ENCODE measurements at regions of chrX and their contacts with region 1.

Region 1: GRCh38 chrX:119468930-119469635 is 839 bp downstream of the SLC25A5 start:
- DNase-seq: peak; percentile 74 to 86
- ATAC-seq: peak; percentile 82 to 85
- H3K4me3 ChIP-seq: peak overlapping the region; percentile 79 to 95 (median 89)
- H3K27ac ChIP-seq: peak overlapping the region; percentile 95 to 99 (median 98)
- H3K4me1 ChIP-seq: peaks cover 0 to 6% of the 10 kb centered on the region in 2 donors
- H3K27me3 ChIP-seq: no peaks in the 10 kb centered on the region
- CTCF ChIP-seq: peak; percentile 64 to 85 (median 77)
- POLR2A ChIP-seq: peak; percentile 54 to 64

Region 2: GRCh38 chrX:119516157-119516702 is 47.1 kb after region 1 on chrX:
- in situ Hi-C with region 1: no loop called
- intact Hi-C with region 1: loop called (anchors 1 kb)
- DNase-seq: peak; percentile 5 to 16
- ATAC-seq: peak; percentile 62 to 87
- H3K4me3 ChIP-seq: no peak overlapping the region
- H3K27ac ChIP-seq: no peak overlapping the region
- H3K4me1 ChIP-seq: no peaks in the 10 kb centered on the region
- H3K27me3 ChIP-seq: no peaks in the 10 kb centered on the region
- CTCF ChIP-seq: peak; percentile 33 to 71 (median 61)
- POLR2A ChIP-seq: no peak

Region 3: DNA sequence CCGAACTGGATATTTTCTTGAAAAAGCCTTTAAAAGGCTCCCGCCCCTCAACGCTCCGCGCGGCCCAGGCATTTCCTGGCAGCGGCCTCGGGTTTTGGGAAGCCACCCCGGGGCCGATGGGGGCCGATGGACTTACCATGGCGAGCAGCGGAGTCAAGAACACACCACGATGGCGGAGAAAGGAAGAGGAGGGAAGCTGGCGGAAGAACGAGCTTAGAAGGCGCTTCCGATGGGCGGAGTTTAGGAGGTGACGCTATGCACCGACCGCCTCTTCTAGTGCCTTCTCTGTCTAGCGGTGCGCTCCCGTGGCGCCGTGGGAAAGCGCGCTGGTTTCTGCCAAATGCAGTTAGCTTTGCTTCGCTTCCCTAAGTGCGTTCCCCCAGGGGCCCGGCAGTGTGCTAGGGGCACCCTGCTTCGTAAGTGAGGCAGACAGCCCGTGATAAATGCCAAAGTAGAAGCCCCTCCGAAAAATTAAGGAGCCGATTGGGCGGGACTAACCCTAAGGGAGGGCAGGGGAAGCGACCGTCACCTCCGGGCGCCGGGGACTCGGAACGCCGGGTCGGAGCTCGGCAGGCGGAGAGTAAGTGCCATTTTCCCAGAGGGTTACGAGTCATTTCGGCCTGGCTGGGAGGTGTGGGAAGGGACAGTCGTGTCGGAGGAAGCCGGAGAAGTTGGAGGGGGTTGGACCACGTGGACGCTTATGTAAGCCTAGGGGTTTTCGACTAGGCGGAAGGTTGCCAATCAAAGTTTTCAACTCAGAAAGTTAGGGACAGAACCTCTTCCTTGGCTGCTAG is 322.6 kb after region 1 on chrX and contains the start of gene RPL39:
- in situ Hi-C with region 1: no loop called
- intact Hi-C with region 1: loop called (anchors 2 kb)
- DNase-seq: peak; percentile 71 to 80
- ATAC-seq: peak; percentile 98
- H3K4me3 ChIP-seq: peak within 1 kb of the TSS; percentile 76 to 95 (median 82)
- H3K27ac ChIP-seq: peak within 1 kb of the TSS; percentile 94 to 96 (median 96)
- H3K4me1 ChIP-seq: peaks cover 14 to 26% of the 10 kb centered on the region in 2 donors
- H3K27me3 ChIP-seq: no peaks in the 10 kb centered on the region
- CTCF ChIP-seq: no peak
- POLR2A ChIP-seq: peak; percentile 72 to 86
- total RNA-seq, gene RPL39: 3,033 to 5,904 (median 3,913) TPM

Region 4: GRCh38 chrX:119871599-119872395 is 402.7 kb after region 1 on chrX and contains the starts of genes NDUFA1 and RNF113A:
- in situ Hi-C with region 1: no loop called
- intact Hi-C with region 1: loop called (anchors 5 kb)
- DNase-seq: peak; percentile 72 to 88
- ATAC-seq: peak; percentile 94 to 95
- H3K4me3 ChIP-seq: peak within 1 kb of the TSS; percentile 69 to 83 (median 76)
- H3K27ac ChIP-seq: peak within 1 kb of the TSS; percentile 93 to 98 (median 94)
- H3K4me1 ChIP-seq: peaks cover 6 to 32% of the 10 kb centered on the region in 2 donors
- H3K27me3 ChIP-seq: no peaks in the 10 kb centered on the region
- CTCF ChIP-seq: no peak
- POLR2A ChIP-seq: peak; percentile 69 to 75
- total RNA-seq, gene NDUFA1: 101 to 119 (median 105) TPM
- total RNA-seq, gene RNF113A: 8.9 to 15.7 (median 12.1) TPM